Esophagus muscularis mucosa (tissue), 4 donors: ENCODE measurements at regions of chr10 and their contacts with region 1.

Region 1: GRCh38 chr10:7410862-7411670 is at the start of gene SFMBT2:
- DNase-seq: no peak
- H3K4me3 ChIP-seq: peak within 1 kb of the TSS; percentile 61 to 89 (median 82)
- H3K27ac ChIP-seq: peak within 1 kb of the TSS; percentile 81 to 88 (median 84)
- H3K4me1 ChIP-seq: peaks cover 33 to 57% (median 54%) of the 10 kb centered on the region in 4 donors
- H3K27me3 ChIP-seq: peaks cover 0 to 23% (median 11%) of the 10 kb centered on the region in 4 donors
- CTCF ChIP-seq: peak in 1 of 3 experiments; percentile 20
- EP300 ChIP-seq: no peak
- POLR2A ChIP-seq: no peak
- total RNA-seq, gene SFMBT2: 7.6 to 15.4 (median 10.8) TPM

Region 2: GRCh38 chr10:6786579-6787031 is 624.5 kb before region 1 on chr10:
- intact Hi-C with region 1: loop called (anchors 5 kb)
- DNase-seq: peak; percentile 62
- H3K4me3 ChIP-seq: peak overlapping the region in 2 of 4 donors; percentile 12 to 38
- H3K27ac ChIP-seq: no peak overlapping the region
- H3K4me1 ChIP-seq: peaks cover 0 to 13% (median 7%) of the 10 kb centered on the region in 4 donors
- H3K27me3 ChIP-seq: no peaks in the 10 kb centered on the region
- CTCF ChIP-seq: peak; percentile 29 to 50 (median 39)
- EP300 ChIP-seq: no peak
- POLR2A ChIP-seq: no peak

Region 3: DNA sequence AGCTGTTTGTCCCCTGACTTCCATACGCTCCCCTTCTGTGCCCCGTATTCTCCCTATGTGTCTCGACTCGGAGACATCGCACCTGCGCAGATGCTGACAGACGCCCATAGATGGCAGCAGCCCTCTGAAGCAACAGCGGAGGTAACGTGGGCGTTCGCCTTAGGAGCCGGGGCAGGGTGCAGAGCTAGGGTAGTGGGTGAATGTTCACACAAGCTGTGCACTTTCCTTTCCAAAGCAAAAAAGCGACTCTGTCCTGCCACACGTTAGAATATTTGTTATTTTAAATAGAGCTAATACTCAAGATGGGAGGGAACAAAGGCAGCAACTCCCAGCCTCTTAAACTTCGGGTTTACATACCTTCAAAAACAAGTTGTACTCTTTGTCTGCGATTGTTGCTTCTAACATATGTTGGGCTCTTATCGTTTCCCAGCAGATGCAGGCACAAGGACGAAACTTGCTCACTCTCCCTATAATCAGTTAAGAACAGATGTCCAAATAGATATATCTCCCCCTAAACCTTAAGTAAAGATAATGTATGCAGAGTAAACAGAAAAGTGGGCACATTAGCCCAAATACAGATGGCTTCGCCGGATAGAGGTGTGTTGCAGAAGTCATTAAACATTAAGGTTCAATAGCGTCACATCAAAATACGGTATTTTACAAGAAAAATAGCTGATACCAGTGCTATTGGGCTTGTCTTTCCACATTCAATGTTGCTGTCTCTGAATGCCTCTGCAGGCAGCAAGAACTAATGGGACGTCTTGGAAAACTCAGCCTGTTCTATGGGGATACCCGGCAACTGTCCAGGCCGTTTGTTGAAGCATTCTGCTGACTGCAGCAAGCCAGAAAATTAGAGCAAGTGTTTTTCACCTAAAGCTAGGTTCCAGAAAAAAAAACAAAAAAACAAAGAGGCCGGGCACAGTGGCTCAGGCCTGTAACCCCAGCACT is 490.7 kb before region 1 on chr10:
- intact Hi-C with region 1: loop called (anchors 5 kb)
- DNase-seq: peak; percentile 94
- H3K4me3 ChIP-seq: peak overlapping the region; percentile 10 to 22 (median 18)
- H3K27ac ChIP-seq: no peak overlapping the region
- H3K4me1 ChIP-seq: peaks cover 0 to 24% (median 16%) of the 10 kb centered on the region in 4 donors
- H3K27me3 ChIP-seq: no peaks in the 10 kb centered on the region
- CTCF ChIP-seq: peak; percentile 67 to 81 (median 72)
- EP300 ChIP-seq: no peak
- POLR2A ChIP-seq: no peak

Region 4: DNA sequence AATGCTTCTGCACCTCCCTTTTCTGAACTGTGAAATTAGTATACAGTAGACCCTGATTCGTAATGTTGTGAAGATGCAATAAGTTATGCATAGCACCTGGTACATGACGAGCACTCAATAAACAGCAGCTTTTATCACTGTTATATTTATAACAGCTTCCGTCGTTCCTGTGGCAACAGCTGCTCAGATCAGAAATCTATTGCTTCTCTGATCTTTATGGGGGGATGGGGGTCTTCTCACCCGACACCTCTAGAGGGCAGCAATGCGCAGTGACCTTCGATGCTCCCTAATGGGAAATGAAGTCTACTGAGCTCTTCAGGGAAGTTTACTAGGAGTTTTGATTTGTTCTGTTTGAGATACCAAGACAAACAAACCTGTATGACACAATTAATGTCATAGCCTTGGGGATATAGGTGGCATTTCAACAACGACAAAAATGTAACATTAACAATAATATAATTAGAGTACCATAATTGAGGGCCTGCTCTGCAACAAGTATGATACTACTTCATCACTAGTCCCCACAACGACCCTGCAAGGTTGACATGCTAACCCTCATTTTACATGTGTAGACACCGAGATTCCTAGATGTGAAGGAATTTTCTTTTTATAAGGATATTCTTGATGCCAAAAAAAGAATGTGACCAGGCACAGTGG is 289.8 kb before region 1 on chr10:
- intact Hi-C with region 1: loop called (anchors 10 kb)
- DNase-seq: no peak
- H3K4me3 ChIP-seq: no peak overlapping the region
- H3K27ac ChIP-seq: no peak overlapping the region
- H3K4me1 ChIP-seq: no peaks in the 10 kb centered on the region
- H3K27me3 ChIP-seq: peaks cover 0 to 6% (median 0%) of the 10 kb centered on the region in 4 donors
- CTCF ChIP-seq: peak; percentile 50 to 61 (median 53)
- EP300 ChIP-seq: no peak
- POLR2A ChIP-seq: no peak

Region 5: GRCh38 chr10:7225133-7225532 is 185.9 kb before region 1 on chr10:
- intact Hi-C with region 1: no loop called
- DNase-seq: no peak
- H3K4me3 ChIP-seq: no peak overlapping the region
- H3K27ac ChIP-seq: no peak overlapping the region
- H3K4me1 ChIP-seq: no peaks in the 10 kb centered on the region
- H3K27me3 ChIP-seq: no peaks in the 10 kb centered on the region
- CTCF ChIP-seq: no peak
- EP300 ChIP-seq: no peak
- POLR2A ChIP-seq: no peak

Region 6: GRCh38 chr10:7260412-7260900 is 150.6 kb before region 1 on chr10:
- intact Hi-C with region 1: loop called (anchors 2 kb)
- DNase-seq: peak; percentile 96
- H3K4me3 ChIP-seq: no peak overlapping the region
- H3K27ac ChIP-seq: peak overlapping the region; percentile 76 to 83 (median 78)
- H3K4me1 ChIP-seq: peaks cover 39 to 52% (median 45%) of the 10 kb centered on the region in 4 donors
- H3K27me3 ChIP-seq: no peaks in the 10 kb centered on the region
- CTCF ChIP-seq: peak; percentile 81 to 91 (median 88)
- EP300 ChIP-seq: no peak
- POLR2A ChIP-seq: no peak

Region 7: DNA sequence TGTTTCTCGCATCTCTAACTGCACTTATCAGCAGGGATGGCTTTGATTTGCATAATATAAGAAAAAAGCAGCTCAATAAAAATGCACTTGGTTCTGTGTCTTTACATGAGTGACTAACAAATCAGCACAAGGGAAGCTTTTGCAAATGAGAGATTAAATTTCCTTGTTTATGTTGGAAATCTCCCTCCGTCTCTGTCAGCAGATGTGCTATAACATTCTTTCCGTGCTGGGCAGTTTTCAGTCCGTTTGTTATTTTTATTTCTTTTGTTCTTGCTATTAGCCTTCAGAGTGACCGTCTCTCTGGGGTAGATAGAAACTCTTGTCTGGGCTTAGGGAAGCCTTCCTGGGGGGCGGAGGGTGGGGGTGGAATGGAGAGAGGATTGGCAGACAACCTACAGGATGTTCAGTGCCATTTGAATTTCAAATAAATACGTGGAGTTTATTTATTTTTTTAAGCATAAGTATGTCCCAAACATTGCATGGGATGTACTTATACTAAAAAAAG is 739.4 kb after region 1 on chr10:
- intact Hi-C with region 1: no loop called
- DNase-seq: no peak
- H3K4me3 ChIP-seq: no peak overlapping the region
- H3K27ac ChIP-seq: no peak overlapping the region
- H3K4me1 ChIP-seq: no peaks in the 10 kb centered on the region
- H3K27me3 ChIP-seq: peaks cover 0 to 21% (median 0%) of the 10 kb centered on the region in 4 donors
- CTCF ChIP-seq: no peak
- EP300 ChIP-seq: no peak
- POLR2A ChIP-seq: no peak

Region 8: DNA sequence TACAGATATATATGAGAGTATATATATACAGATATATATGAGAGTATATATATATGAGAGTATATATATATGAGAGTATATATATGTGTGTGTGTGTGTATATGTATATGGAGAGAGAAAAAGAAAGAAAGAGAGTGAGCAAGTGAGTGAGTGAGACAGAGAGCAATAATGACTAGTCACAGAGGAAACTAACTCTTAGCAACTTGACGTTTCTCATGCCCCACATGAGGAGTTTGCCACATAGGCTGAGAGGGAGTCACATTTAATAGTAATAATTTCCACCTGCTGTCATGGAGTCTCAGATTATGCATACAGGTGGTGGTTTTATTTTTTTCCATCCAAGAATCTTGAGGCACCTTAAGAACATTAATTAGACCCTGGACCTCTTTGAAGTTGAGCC is 843.3 kb after region 1 on chr10:
- intact Hi-C with region 1: no loop called
- DNase-seq: no peak
- H3K4me3 ChIP-seq: no peak overlapping the region
- H3K27ac ChIP-seq: no peak overlapping the region
- H3K4me1 ChIP-seq: no peaks in the 10 kb centered on the region
- H3K27me3 ChIP-seq: peaks cover 0 to 3% (median 0%) of the 10 kb centered on the region in 4 donors
- CTCF ChIP-seq: no peak
- EP300 ChIP-seq: no peak
- POLR2A ChIP-seq: no peak